Adrenal gland (tissue), 19 donors: ENCODE measurements at regions of chr16 and their contacts with region 1.

Region 1: GRCh38 chr16:11639925-11640899 is 28.0 kb upstream of the SNN start:
- DNase-seq: peak; percentile 88 to 98 (median 96)
- H3K4me3 ChIP-seq: no peak overlapping the region
- H3K27ac ChIP-seq: peak overlapping the region; percentile 77 to 96 (median 90)
- H3K4me1 ChIP-seq: peaks cover 10 to 17% of the 10 kb centered on the region in 2 donors
- H3K27me3 ChIP-seq: no peaks in the 10 kb centered on the region
- CTCF ChIP-seq: no peak
- POLR2A ChIP-seq: peak in 1 of 2 donors; percentile 81

Region 2: DNA sequence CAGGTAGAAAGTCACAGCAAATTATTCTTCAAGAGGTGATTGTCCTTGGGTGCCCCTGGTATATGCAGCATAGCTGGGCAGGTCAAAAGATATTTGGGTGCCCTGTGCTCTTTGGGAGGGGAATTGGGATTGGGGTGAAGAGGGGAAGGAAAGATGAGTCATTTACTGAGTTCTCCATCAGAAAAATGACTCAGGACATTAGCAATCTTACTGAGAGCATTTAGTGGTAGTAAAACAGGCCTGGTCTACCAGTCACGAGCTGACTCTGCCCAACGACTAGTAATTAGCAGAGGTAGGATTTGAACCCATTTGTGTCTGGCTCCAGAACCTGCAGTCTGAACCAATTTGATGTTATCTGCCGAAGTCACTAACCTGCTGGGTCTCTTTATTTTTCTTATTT is 1452.0 kb before region 1 on chr16:
- intact Hi-C with region 1: no loop called
- DNase-seq: no peak
- H3K4me3 ChIP-seq: no peak overlapping the region
- H3K27ac ChIP-seq: no peak overlapping the region
- H3K4me1 ChIP-seq: no peaks in the 10 kb centered on the region
- H3K27me3 ChIP-seq: peaks cover under 1% of the 10 kb centered on the region
- CTCF ChIP-seq: no peak
- POLR2A ChIP-seq: no peak

Region 3: GRCh38 chr16:11576427-11577289 is 63.6 kb before region 1 on chr16:
- intact Hi-C with region 1: no loop called
- DNase-seq: peak in 1 of 7 donors; percentile 50
- H3K4me3 ChIP-seq: no peak overlapping the region
- H3K27ac ChIP-seq: peak overlapping the region in 2 of 5 donors; percentile 24 to 38
- H3K4me1 ChIP-seq: peaks cover 0 to 14% of the 10 kb centered on the region in 2 donors
- H3K27me3 ChIP-seq: no peaks in the 10 kb centered on the region
- CTCF ChIP-seq: no peak
- POLR2A ChIP-seq: no peak

Region 4: GRCh38 chr16:11715246-11715947 is 75.2 kb after region 1 on chr16:
- intact Hi-C with region 1: loop called in 1 of 2 experiments (anchors 10 kb)
- DNase-seq: no peak
- H3K4me3 ChIP-seq: no peak overlapping the region
- H3K27ac ChIP-seq: no peak overlapping the region
- H3K4me1 ChIP-seq: peaks cover 0 to 3% of the 10 kb centered on the region in 2 donors
- H3K27me3 ChIP-seq: no peaks in the 10 kb centered on the region
- CTCF ChIP-seq: no peak
- POLR2A ChIP-seq: no peak